B cell (primary cell): ENCODE measurements at regions of chr14 and their contacts with region 1.

Region 1: DNA sequence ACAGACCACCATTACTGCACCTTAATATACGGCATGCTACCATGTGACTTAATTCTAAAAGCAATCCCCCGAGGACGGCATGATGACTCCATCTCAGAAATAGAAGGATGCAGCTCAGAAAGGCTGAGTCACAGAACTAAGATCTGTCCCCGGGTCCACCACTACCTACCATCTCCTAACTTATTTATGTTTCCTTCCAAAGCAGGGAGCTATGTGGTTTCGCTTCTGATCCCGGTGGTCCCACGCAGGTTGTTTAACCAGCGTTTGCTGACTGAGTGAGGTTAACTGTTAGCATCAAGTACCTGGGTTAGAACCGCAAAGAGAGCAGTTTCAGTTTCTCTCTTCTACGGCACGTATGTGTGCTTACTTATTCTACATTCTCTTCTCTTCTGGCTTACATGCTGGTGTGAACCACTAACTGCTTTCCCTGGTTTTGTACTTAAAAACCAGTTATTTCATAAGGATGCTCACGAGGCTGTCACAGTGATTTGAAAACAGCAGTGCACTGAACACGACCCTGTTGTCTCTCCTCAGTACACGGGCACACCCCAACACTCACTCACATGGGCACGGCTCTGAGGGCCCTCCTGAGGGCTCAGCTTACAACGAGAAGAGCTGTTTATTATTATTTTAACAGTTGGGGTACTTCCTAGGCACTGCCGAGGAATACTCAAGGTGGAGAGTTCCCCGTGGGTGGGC is 66.7 kb downstream of the CCDC88C start:
- DNase-seq: peak; percentile 71
- ATAC-seq: peak; percentile 61
- H3K4me3 ChIP-seq: peak overlapping the region in 4 of 5 experiments; percentile 0 to 49 (median 25)
- H3K4me3 Mint-ChIP-seq: peak overlapping the region; percentile 92
- H3K27ac ChIP-seq: peak overlapping the region; percentile 25 to 61
- H3K27ac Mint-ChIP-seq: peak overlapping the region; percentile 93
- H3K4me1 ChIP-seq: peaks cover 61 to 74% of the 10 kb centered on the region in 2 donors
- H3K4me1 Mint-ChIP-seq: peaks cover 82% of the 10 kb centered on the region
- H3K27me3 ChIP-seq: no peaks in the 10 kb centered on the region
- H3K27me3 Mint-ChIP-seq: no peaks in the 10 kb centered on the region
- CTCF ChIP-seq: no peak

Region 2: DNA sequence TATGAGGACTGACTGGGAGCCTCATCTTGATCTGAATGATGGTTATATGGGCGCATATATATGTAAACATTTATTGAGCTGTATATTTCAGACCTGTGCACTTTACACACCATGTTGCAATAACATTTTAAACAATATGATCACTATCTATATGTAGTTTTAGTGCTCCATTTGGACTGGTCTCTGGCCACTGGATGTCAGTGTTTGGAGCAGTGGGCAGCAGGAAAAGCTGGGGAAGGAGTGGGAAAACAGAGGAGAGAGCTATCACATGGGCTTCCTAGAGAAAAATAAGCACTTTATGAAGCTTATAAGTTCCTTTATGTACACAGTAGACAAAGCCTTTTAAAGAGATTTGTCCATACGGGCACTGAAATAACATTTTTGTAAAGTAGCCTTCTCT is 485.5 kb before region 1 on chr14:
- CTCF ChIA-PET with region 1: no interaction called
- POLR2A ChIA-PET with region 1: no interaction called
- intact Hi-C with region 1: no loop called
- DNase-seq: no peak
- ATAC-seq: no peak
- H3K4me3 ChIP-seq: no peak overlapping the region
- H3K4me3 Mint-ChIP-seq: no peak overlapping the region
- H3K27ac ChIP-seq: no peak overlapping the region
- H3K27ac Mint-ChIP-seq: no peak overlapping the region
- H3K4me1 ChIP-seq: no peaks in the 10 kb centered on the region
- H3K4me1 Mint-ChIP-seq: no peaks in the 10 kb centered on the region
- H3K27me3 ChIP-seq: no peaks in the 10 kb centered on the region
- H3K27me3 Mint-ChIP-seq: no peaks in the 10 kb centered on the region
- CTCF ChIP-seq: no peak

Region 3: DNA sequence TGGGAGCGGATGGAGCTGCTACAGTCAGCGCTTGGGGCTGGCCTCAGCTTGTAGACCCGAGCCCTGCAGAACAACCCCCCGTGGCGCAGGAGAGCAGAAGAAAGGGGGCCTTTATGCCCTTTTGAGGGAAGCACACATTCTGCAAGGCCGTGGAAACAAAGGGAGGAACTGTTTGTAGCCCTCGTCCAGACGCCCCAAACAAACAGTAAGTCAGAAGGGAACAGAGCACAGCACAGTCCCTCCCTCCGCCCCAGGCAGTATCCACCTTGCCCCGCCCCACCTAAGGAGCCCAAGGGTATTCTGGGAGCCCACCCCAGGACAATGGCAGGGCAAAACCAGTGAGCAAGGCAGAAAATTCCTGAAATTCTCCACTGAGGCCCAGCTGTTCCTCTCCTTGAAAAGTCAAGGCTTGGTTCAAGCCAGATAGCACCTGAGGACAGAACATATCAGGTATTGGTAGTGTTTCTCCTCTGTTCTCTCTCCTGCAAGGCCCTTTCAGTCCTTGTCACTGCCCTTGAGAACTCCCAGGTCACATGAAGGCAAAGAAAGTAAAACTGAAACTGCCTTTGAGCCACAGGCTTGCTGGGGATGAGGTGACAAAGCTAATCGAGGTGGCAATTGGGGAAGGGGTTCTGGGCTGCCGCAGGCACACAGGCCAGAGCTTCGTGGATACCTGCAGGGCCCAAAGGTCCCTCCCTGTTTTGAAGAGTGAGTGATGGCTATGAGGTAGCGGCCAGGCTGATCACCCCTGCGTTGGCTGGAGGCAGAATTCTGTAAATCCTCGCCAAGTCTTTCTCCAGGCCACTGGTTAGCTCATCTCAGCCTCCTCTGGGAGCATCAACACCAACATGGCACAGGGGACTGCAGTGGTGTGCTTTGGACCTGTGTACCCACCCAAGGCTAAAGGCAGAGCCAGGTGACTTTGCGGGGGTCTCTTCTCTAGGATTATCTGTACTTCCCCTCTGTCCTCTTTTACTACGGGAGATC is 236.6 kb before region 1 on chr14:
- CTCF ChIA-PET with region 1: no interaction called
- POLR2A ChIA-PET with region 1: no interaction called
- intact Hi-C with region 1: no loop called
- DNase-seq: peak; percentile 85
- ATAC-seq: peak; percentile 80
- H3K4me3 ChIP-seq: peak overlapping the region; percentile 71 to 94 (median 82)
- H3K4me3 Mint-ChIP-seq: peak overlapping the region; percentile 93
- H3K27ac ChIP-seq: peak overlapping the region; percentile 89 to 95
- H3K27ac Mint-ChIP-seq: peak overlapping the region; percentile 98
- H3K4me1 ChIP-seq: peaks cover 35 to 50% of the 10 kb centered on the region in 2 donors
- H3K4me1 Mint-ChIP-seq: peaks cover 68% of the 10 kb centered on the region
- H3K27me3 ChIP-seq: no peaks in the 10 kb centered on the region
- H3K27me3 Mint-ChIP-seq: no peaks in the 10 kb centered on the region
- CTCF ChIP-seq: no peak

Region 4: GRCh38 chr14:91373591-91374254 is 22.8 kb after region 1 on chr14:
- CTCF ChIA-PET with region 1: interaction called, 24 read pairs
- POLR2A ChIA-PET with region 1: interaction called, 4 read pairs
- intact Hi-C with region 1: no loop called
- DNase-seq: peak; percentile 63
- ATAC-seq: peak; percentile 54
- H3K4me3 ChIP-seq: peak overlapping the region in 3 of 5 experiments; percentile 5 to 31 (median 9)
- H3K4me3 Mint-ChIP-seq: peak overlapping the region; percentile 88
- H3K27ac ChIP-seq: peak overlapping the region; percentile 73 to 80
- H3K27ac Mint-ChIP-seq: peak overlapping the region; percentile 96
- H3K4me1 ChIP-seq: peaks cover 84 to 98% of the 10 kb centered on the region in 2 donors
- H3K4me1 Mint-ChIP-seq: peaks cover 97% of the 10 kb centered on the region
- H3K27me3 ChIP-seq: no peaks in the 10 kb centered on the region
- H3K27me3 Mint-ChIP-seq: no peaks in the 10 kb centered on the region
- CTCF ChIP-seq: no peak